Common myeloid progenitor, CD34-positive (primary cell): ENCODE measurements at regions of chr15 and their contacts with region 1.

Region 1: DNA sequence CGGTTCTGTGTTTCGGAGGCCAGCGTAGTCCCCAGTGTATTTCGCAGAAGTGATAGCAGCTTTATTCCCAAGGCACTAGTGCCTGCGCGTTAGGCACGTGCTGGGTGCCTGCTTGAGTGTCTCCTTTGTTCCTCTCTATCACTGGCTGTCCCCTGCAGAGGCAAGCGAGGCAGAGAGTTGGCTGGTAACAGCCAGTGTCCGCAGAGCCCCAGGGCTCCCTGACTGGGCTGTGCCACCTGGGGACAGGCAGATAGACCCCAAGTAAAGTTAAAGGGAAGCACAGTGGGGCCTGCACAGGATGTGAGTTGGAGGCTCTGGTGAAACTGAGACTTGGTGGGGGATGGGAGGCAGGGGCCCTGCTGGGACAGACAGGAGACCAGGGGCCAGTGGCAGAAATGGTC is 50.7 kb downstream of the APBA2 start:
- DNase-seq: no peak
- H3K4me3 ChIP-seq: no peak overlapping the region
- H3K27ac ChIP-seq: no peak overlapping the region
- H3K4me1 ChIP-seq: peaks cover 2 to 42% (median 26%) of the 10 kb centered on the region in 4 experiments
- H3K27me3 ChIP-seq: peaks cover 0 to 60% (median 0%) of the 10 kb centered on the region in 5 experiments

Region 2: DNA sequence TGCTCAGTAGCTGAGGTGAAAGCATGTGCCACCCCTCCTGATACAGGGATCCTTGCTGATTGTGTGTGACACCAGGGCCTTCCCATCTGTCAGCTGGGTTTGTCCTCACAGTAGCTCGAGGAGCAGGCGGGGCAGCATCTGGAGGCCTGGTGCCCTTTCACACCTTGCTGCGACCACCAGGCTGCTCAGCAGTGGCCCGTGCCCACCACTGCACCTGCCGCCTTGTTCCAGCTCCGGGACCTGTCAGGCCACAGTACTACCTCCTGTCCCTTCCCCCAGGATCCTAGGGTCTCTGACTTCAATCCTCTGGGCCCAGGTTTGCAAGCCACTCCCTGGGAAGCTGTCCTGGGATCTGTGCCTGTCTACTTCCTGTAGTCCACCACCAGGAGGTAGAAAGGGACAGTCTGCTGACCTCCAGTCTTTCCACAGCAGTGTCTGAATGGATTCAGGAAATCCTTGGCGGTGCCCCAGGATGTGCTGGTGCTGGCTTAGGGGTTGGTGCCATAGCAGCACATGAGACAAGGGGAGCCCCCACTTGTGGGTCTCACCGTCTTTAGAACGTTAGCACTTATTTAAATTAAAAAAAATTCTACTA is 23.2 kb before region 1 on chr15:
- CTCF ChIA-PET with region 1: interaction called, 10 read pairs
- POLR2A ChIA-PET with region 1: no interaction called
- DNase-seq: no peak
- H3K4me3 ChIP-seq: no peak overlapping the region
- H3K27ac ChIP-seq: no peak overlapping the region
- H3K4me1 ChIP-seq: peaks cover 2 to 23% (median 13%) of the 10 kb centered on the region in 4 experiments
- H3K27me3 ChIP-seq: peaks cover 0 to 23% (median 2%) of the 10 kb centered on the region in 5 experiments